ENCODE measurements at regions of chr1 and their contacts with region 1.

Region 1: DNA sequence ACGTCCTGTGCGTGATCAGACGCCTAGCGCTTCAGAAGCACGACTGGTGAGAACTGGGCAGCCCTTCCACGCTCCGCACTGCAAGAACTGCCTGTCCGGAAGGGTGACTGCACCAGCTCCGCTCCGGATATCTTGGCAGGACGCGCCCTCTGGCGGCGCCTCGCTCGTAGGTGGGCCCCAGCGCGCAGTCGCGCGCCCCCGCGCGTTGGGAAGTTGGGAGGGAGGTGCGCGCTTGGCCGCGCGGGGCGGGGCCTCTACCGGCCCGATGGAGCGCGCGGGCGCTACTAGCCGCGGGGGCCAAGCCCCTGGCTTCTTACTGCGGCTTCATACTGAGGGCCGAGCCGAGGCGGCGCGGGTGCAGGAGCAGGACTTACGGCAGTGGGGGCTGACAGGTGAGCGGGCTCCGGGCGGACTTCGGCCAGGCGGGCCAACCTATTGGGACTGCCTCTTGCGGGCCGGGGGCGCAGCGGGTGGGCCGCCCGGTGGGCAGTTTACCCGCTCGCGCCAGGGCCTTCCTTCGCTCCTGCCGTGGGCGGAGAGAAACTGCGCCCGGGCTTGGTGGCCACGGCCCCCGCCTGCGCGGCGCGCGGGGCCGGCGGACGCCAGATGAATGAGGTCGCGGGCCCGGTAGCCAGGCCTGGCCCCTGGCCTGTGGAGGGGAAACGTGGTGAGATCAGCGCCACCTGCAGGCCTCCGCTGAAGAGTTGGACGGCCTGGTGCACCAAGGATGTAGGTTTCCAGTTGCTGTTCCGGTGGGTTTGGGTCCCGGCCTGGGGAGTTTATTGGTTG is at the start of gene CHD1L:
- DNase-seq: peak; percentile 92
- H3K4me3 Mint-ChIP-seq: peak within 1 kb of the TSS; percentile 91
- H3K27ac Mint-ChIP-seq: peak within 1 kb of the TSS; percentile 79
- H3K4me1 Mint-ChIP-seq: peaks cover 38% of the 10 kb centered on the region
- H3K27me3 Mint-ChIP-seq: peaks cover 11% of the 10 kb centered on the region
- total RNA-seq, gene CHD1L: 76.6 and 86.0 TPM in 2 replicates

Region 2: DNA sequence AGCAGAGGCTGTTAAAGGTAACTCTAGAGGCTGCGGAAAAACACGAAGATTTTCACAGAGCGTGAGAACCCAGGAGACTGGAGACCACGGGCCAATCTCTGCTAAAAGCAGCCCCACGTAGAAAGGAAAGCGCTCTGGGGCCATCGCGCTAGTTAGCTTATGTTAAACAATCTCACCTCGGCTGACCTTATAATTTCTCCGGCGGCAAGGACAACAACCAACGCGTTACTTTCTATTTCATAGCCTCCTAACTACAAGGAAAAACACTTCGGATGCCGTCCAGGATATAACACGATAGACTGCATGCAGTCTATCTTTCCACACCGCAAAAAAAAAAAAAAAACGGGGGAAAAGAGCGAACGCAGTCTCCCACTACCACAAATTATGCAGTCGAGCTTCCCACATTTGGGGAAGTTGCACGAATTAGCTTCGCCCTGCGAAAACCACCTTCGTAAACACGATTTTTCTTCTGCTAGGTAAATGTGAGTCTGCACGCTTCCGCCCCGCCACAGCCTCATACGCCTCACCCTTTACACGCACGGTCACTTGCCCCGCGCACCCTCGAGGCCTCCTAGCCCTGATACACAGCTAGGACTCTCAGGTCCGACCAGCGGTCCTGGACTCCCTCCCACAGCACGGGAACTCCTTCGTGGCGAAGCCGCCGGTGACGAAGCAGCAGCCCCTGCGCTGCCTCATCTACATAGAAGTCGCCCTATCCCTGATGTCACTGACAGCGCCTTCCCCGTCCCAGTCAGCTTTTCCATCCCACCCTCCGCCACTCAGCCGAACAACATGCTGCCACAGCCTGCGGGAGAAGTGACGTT is 158.1 kb before region 1 on chr1:
- intact Hi-C with region 1: loop called (anchors 1 kb)
- DNase-seq: peak; percentile 71
- H3K4me3 Mint-ChIP-seq: peak overlapping the region; percentile 90
- H3K27ac Mint-ChIP-seq: peak overlapping the region; percentile 100
- H3K4me1 Mint-ChIP-seq: peaks cover 30% of the 10 kb centered on the region
- H3K27me3 Mint-ChIP-seq: peaks cover 70% of the 10 kb centered on the region

Region 3: GRCh38 chr1:147172168-147172992 is 70.3 kb before region 1 on chr1 and contains the start of gene PRKAB2:
- intact Hi-C with region 1: loop called (anchors 1 kb)
- DNase-seq: peak; percentile 87
- H3K4me3 Mint-ChIP-seq: peak within 1 kb of the TSS; percentile 96
- H3K27ac Mint-ChIP-seq: peak within 1 kb of the TSS; percentile 96
- H3K4me1 Mint-ChIP-seq: peaks cover 37% of the 10 kb centered on the region
- H3K27me3 Mint-ChIP-seq: peaks cover 5% of the 10 kb centered on the region
- total RNA-seq, gene PRKAB2: 9.1 and 9.5 TPM in 2 replicates